Activated CD4-positive, alpha-beta memory T cell treated with anti-CD3 and anti-CD28 coated beads, Interleukin-2, amount 10 ng/mL, durations not matched to agents 7 days and 5 days (primary cell): ENCODE measurements at regions of chr9 and their contacts with region 1.

Region 1: DNA sequence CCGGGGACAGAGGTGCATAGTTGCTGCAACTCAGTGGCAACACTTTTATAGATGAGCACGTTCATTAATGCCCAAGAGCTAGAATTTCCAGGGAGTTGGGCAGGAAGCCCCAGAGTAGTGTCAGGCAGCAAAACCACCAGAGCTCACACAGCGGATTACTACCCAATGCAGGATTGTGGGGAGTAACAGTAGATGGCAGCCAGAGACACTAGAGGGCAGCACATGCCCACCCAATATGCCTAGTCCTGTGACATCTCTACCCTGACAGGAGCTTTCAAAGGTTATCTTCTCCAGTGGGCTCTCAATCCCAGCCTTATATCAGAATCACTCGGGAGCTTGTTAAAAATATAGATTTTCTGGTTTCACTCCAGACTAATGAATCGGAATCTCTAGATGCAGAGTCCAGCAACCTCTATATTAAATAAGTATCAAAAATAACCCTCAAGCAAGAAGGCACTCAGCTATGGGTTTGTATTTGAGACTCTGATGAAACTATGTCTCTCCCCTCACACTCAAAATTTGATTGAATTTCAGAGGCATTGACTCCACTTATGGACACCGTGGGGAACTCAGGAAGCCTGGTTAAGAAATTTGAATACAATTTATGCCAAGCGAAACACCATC is 58.4 kb upstream of the PHF24 start:
- DNase-seq: peak; percentile 82
- H3K4me3 Mint-ChIP-seq: no peak overlapping the region
- H3K27ac Mint-ChIP-seq: no peak overlapping the region
- H3K4me1 Mint-ChIP-seq: no peaks in the 10 kb centered on the region
- H3K27me3 Mint-ChIP-seq: peaks cover 26% of the 10 kb centered on the region

Region 2: DNA sequence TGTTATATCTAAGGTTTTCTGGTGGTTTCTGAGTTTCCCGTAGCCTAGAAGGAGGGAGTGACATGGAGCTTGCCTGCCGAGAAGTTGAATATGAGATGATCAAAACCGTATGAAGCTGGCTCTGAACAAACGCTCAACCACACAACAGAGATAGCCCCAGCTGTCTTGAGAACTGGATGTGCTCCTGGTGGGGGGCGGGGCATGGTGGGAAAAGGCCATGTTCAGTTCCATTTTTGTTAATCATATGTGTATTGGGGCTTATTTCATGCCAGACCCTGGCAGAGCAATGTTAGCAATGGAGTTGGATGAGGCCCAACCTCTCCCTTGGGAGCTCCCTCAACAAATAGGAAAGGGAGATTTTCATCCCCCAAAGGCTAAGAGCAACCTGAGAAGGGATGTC is 213.4 kb before region 1 on chr9:
- CTCF ChIA-PET with region 1: no interaction called
- POLR2A ChIA-PET with region 1: no interaction called
- DNase-seq: no peak
- H3K4me3 Mint-ChIP-seq: no peak overlapping the region
- H3K27ac Mint-ChIP-seq: no peak overlapping the region
- H3K4me1 Mint-ChIP-seq: peaks cover 10% of the 10 kb centered on the region
- H3K27me3 Mint-ChIP-seq: no peaks in the 10 kb centered on the region

Region 3: DNA sequence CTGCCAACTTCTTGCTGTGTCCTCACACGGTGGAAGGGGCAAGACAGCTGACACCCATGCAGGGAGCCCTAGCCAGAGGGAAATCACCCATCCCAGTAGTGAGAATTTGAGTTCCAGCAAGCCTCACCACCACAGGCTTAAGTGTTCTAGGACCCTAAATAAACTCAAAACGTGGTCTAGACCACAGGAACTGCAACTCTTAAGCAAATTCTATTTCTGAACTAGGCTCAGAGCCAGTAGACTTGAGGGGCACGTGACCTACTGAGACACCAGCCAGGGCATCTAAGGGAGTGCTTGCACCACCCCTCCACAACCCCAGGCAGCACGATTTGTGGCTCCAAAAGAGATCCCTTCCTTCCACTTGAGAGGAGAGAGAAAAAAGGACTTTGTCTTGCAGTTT is 37.6 kb before region 1 on chr9:
- CTCF ChIA-PET with region 1: no interaction called
- POLR2A ChIA-PET with region 1: no interaction called
- DNase-seq: no peak
- H3K4me3 Mint-ChIP-seq: no peak overlapping the region
- H3K27ac Mint-ChIP-seq: no peak overlapping the region
- H3K4me1 Mint-ChIP-seq: no peaks in the 10 kb centered on the region
- H3K27me3 Mint-ChIP-seq: peaks cover 13% of the 10 kb centered on the region

Region 4: DNA sequence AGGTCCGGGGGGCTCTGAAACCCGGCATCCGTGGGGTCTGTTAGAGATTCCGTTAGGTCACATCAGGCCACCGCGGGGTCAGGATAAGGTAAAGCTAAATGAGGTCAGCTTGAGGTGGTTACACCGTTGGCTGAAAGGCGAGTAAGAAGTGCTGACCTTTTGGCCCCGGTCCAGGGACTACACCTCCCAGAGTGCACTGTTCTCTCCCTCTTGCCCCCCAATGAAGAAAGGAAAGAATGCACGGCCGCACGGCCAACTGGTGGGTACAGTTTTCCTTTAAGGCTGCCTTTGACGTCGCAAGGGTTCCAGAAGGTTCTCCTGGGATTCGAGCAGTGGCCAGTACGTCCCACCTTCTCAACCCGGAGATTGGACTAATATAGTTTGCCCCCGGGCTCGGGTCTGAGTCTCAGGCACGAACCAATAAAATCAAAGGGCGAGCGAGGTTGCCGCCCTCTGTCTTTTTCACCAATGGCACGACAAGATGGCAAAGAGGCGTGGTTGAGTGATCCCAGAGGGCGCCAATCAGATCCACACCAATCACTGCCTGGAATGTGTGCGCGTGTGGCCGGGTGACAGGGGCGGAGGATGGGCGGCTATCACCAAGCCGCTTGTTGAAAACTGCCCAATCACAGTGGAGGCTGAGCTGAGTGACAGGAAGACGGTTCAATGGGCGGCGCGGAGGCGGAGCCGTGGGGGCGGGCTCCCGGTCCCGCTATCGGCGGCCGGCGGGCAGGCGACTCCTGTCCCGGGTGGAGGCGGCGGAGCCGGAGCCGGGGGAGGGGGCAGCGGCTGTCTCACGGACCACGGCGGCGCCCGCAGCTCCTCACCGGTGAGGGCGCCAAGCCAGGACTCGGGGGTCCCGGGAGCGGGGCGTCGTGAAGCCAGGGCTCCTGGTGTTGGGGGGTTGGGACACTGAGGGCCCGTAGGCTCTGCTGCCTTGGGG is 89.6 kb after region 1 on chr9 and contains the start of gene DNAJB5:
- CTCF ChIA-PET with region 1: interaction called, 39 read pairs
- POLR2A ChIA-PET with region 1: interaction called, 3 read pairs
- DNase-seq: peak; percentile 98
- H3K4me3 Mint-ChIP-seq: peak within 1 kb of the TSS; percentile 81
- H3K27ac Mint-ChIP-seq: peak within 1 kb of the TSS; percentile 76
- H3K4me1 Mint-ChIP-seq: peaks cover 59% of the 10 kb centered on the region
- H3K27me3 Mint-ChIP-seq: no peaks in the 10 kb centered on the region
- total RNA-seq, gene DNAJB5: 3.2 to 4.1 TPM

Region 5: GRCh38 chr9:34996905-34997279 is 97.2 kb after region 1 on chr9:
- CTCF ChIA-PET with region 1: interaction called, 12 read pairs
- POLR2A ChIA-PET with region 1: no interaction called
- DNase-seq: no peak
- H3K4me3 Mint-ChIP-seq: no peak overlapping the region
- H3K27ac Mint-ChIP-seq: no peak overlapping the region
- H3K4me1 Mint-ChIP-seq: peaks cover 20% of the 10 kb centered on the region
- H3K27me3 Mint-ChIP-seq: no peaks in the 10 kb centered on the region

Region 6: GRCh38 chr9:35051069-35051967 is 151.7 kb after region 1 on chr9:
- CTCF ChIA-PET with region 1: interaction called, 51 read pairs
- POLR2A ChIA-PET with region 1: interaction called, 4 read pairs
- DNase-seq: peak; percentile 49
- H3K4me3 Mint-ChIP-seq: no peak overlapping the region
- H3K27ac Mint-ChIP-seq: no peak overlapping the region
- H3K4me1 Mint-ChIP-seq: no peaks in the 10 kb centered on the region
- H3K27me3 Mint-ChIP-seq: no peaks in the 10 kb centered on the region

Region 7: GRCh38 chr9:35096035-35096849 is 196.6 kb after region 1 on chr9 and contains the start of gene PIGO:
- CTCF ChIA-PET with region 1: interaction called, 38 read pairs
- POLR2A ChIA-PET with region 1: interaction called, 10 read pairs
- DNase-seq: peak; percentile 89
- H3K4me3 Mint-ChIP-seq: peak within 1 kb of the TSS; percentile 82
- H3K27ac Mint-ChIP-seq: peak within 1 kb of the TSS; percentile 86
- H3K4me1 Mint-ChIP-seq: peaks cover 44% of the 10 kb centered on the region
- H3K27me3 Mint-ChIP-seq: no peaks in the 10 kb centered on the region
- total RNA-seq, gene PIGO: 22.8 to 28.6 TPM

Region 8: DNA sequence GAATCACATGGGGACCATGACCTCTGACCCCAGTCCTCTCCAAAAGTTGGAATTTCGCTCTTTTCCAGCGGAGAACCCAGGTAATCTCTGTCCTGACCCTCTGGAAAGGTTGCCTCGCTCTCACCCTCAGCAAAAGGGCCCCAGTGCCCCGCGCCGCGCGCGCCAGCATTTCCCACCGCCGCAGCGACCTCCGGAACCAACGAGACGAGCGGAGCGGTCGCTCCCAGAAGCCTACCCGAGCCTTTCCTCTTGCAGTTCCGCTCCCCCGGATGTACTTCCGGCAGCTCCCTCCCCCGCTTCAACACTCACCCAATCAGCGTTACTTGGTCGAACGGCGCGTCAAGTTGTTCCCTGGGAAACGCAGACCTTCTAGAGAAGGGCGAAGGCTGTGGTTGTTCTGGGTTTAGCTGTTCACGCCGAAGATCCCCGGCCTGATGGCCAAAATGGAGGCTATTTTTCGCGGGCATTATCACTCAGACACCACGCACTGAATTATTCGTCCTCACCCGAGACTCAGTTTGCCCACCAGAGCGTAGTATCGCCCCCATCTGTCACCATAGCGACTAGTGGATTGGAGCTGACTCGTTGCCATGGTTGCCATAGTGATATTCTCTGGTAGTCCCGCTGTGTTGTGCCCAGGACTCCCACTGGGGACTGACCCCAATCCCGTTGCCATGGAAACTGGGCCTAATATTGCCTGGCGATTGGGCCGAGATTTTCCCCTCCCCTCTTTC is 203.4 kb after region 1 on chr9 and contains the start of gene STOML2:
- CTCF ChIA-PET with region 1: interaction called, 15 read pairs
- POLR2A ChIA-PET with region 1: no interaction called
- DNase-seq: peak; percentile 95
- H3K4me3 Mint-ChIP-seq: peak within 1 kb of the TSS; percentile 80
- H3K27ac Mint-ChIP-seq: peak within 1 kb of the TSS; percentile 88
- H3K4me1 Mint-ChIP-seq: peaks cover 39% of the 10 kb centered on the region
- H3K27me3 Mint-ChIP-seq: no peaks in the 10 kb centered on the region
- total RNA-seq, gene STOML2: 96.0 to 96.9 TPM

Region 9: DNA sequence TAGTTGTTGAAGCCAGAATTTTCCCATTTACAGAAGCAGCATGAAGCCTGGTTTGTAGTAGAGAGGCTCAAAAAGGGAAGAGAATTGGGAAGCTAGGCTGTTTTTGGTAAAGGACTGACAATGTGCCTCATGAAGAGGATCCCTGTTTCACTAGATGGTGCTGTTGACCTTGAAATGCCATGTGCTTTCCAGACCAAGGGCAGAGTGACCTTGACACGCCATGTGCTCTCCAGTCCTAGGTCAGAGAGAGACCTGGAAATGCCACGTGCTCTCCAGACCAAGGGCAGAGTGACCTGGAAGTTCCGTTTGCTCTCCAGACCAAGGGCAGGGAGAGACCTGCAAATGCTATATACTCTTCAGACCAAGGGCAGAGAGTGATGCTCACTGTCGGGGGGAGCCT is 294.1 kb after region 1 on chr9:
- CTCF ChIA-PET with region 1: no interaction called
- POLR2A ChIA-PET with region 1: no interaction called
- DNase-seq: no peak
- H3K4me3 Mint-ChIP-seq: no peak overlapping the region
- H3K27ac Mint-ChIP-seq: no peak overlapping the region
- H3K4me1 Mint-ChIP-seq: no peaks in the 10 kb centered on the region
- H3K27me3 Mint-ChIP-seq: no peaks in the 10 kb centered on the region

Region 10: DNA sequence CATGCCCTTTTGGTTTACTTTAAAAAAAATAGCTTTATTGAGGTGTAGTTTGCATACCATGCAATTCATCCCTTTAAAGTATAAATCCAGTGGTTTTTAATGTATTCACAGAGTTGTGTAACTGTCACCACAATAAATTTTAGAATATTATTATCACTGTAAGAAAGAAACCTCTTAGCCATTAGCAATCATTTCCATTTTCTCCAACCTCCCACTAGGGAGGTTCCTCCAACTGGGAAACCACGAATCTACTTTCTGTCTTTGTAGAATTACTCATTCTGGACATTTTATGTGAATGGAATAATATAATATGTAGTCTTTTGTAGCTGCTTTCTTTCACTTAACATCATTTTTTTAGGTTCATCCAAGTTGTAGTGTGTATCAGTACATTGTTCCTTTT is 305.7 kb after region 1 on chr9:
- CTCF ChIA-PET with region 1: no interaction called
- POLR2A ChIA-PET with region 1: no interaction called
- DNase-seq: no peak
- H3K4me3 Mint-ChIP-seq: no peak overlapping the region
- H3K27ac Mint-ChIP-seq: no peak overlapping the region
- H3K4me1 Mint-ChIP-seq: no peaks in the 10 kb centered on the region
- H3K27me3 Mint-ChIP-seq: peaks cover 2% of the 10 kb centered on the region